Mammary epithelial cell (primary cell): ENCODE measurements at regions of chr9 and their contacts with region 1.

Region 1: GRCh38 chr9:21812946-21813568 is 10.6 kb downstream of the MTAP start:
- DNase-seq: peak; percentile 74
- H3K4me3 ChIP-seq: no peak overlapping the region
- H3K27ac ChIP-seq: peak overlapping the region; percentile 79
- H3K4me1 ChIP-seq: peaks cover 50% of the 10 kb centered on the region
- H3K27me3 ChIP-seq: no peaks in the 10 kb centered on the region
- CTCF ChIP-seq: peak; percentile 85 to 91

Region 2: GRCh38 chr9:21119093-21119770 is 693.8 kb before region 1 on chr9:
- CTCF ChIA-PET with region 1: no interaction called
- dilution Hi-C with region 1: no loop called
- in situ Hi-C with region 1: no loop called
- intact Hi-C with region 1: no loop called
- DNase-seq: no peak
- H3K4me3 ChIP-seq: no peak overlapping the region
- H3K27ac ChIP-seq: no peak overlapping the region
- H3K4me1 ChIP-seq: no peaks in the 10 kb centered on the region
- H3K27me3 ChIP-seq: peaks cover 13% of the 10 kb centered on the region
- CTCF ChIP-seq: no peak

Region 3: GRCh38 chr9:21228122-21228521 is 584.9 kb before region 1 on chr9 and contains the start of gene IFNA17:
- CTCF ChIA-PET with region 1: no interaction called
- dilution Hi-C with region 1: no loop called
- in situ Hi-C with region 1: no loop called
- intact Hi-C with region 1: no loop called
- DNase-seq: no peak
- H3K4me3 ChIP-seq: no peak within 1 kb of the TSS
- H3K27ac ChIP-seq: no peak within 1 kb of the TSS
- H3K4me1 ChIP-seq: no peaks in the 10 kb centered on the region
- H3K27me3 ChIP-seq: no peaks in the 10 kb centered on the region
- CTCF ChIP-seq: no peak
- total RNA-seq, gene IFNA17: not detected

Region 4: GRCh38 chr9:21875893-21876292 is 62.8 kb after region 1 on chr9:
- CTCF ChIA-PET with region 1: no interaction called
- dilution Hi-C with region 1: loop called (anchors 5 kb)
- in situ Hi-C with region 1: no loop called
- intact Hi-C with region 1: no loop called
- DNase-seq: no peak
- H3K4me3 ChIP-seq: no peak overlapping the region
- H3K27ac ChIP-seq: no peak overlapping the region
- H3K4me1 ChIP-seq: peaks cover 8% of the 10 kb centered on the region
- H3K27me3 ChIP-seq: no peaks in the 10 kb centered on the region
- CTCF ChIP-seq: no peak

Region 5: DNA sequence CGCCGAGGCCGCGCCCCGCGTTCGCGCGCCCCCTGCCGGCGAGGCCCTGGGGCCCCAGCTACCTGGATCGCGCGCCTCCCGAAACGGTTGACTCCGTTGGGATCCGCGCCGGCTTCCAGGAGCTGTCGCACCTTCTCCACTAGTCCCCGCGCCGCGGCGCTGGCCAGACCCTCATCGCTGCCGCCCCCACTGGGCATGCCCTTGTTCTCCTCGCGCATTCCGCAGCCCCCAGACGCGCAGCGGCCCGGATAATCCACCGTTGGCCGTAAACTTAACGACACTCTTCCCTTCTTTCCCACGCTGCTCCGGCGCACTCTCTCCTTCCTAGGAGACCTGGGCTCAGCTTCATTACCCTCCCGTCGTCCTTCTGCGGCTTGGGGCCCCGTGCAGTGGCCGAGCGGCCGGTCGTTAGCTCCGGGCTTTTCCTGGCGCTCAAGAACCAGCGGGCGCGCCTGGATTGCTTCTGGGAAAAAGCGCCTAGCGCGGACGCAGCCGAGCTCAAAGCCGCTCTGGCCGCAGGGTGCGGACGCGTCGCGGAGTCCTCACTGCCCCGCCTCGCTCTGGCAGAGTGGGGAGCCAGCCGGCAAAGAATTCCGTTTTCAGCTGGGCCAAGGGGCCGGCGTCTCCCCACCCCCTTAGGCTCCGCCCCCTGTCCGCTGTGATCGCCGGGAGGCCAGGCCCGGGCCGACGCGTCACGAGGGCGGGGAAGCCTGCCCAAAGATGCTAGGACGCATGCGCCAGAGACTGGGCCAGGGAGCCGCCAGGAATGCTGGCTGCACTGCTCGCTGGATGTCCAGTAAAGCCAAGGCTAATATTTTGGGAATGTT is 195.9 kb after region 1 on chr9 and contains the start of gene CDKN2B:
- CTCF ChIA-PET with region 1: interaction called, 15 read pairs
- dilution Hi-C with region 1: no loop called
- in situ Hi-C with region 1: loop called (anchors 5 to 10 kb)
- intact Hi-C with region 1: loop called (anchors 1 kb)
- DNase-seq: peak; percentile 97
- H3K4me3 ChIP-seq: peak within 1 kb of the TSS; percentile 95 to 98 (median 96)
- H3K27ac ChIP-seq: peak within 1 kb of the TSS; percentile 88
- H3K4me1 ChIP-seq: peaks cover 12% of the 10 kb centered on the region
- H3K27me3 ChIP-seq: no peaks in the 10 kb centered on the region
- CTCF ChIP-seq: peak; percentile 63 to 97
- total RNA-seq, gene CDKN2B: 27.6 to 50.0 TPM

Region 6: GRCh38 chr9:22119537-22120158 is 306.6 kb after region 1 on chr9:
- CTCF ChIA-PET with region 1: interaction called, 7 read pairs
- dilution Hi-C with region 1: no loop called
- in situ Hi-C with region 1: loop called (anchors 10 kb)
- intact Hi-C with region 1: loop called (anchors 1 kb)
- DNase-seq: peak; percentile 59
- H3K4me3 ChIP-seq: no peak overlapping the region
- H3K27ac ChIP-seq: no peak overlapping the region
- H3K4me1 ChIP-seq: peaks cover 28% of the 10 kb centered on the region
- H3K27me3 ChIP-seq: no peaks in the 10 kb centered on the region
- CTCF ChIP-seq: peak; percentile 65 to 71

Region 7: DNA sequence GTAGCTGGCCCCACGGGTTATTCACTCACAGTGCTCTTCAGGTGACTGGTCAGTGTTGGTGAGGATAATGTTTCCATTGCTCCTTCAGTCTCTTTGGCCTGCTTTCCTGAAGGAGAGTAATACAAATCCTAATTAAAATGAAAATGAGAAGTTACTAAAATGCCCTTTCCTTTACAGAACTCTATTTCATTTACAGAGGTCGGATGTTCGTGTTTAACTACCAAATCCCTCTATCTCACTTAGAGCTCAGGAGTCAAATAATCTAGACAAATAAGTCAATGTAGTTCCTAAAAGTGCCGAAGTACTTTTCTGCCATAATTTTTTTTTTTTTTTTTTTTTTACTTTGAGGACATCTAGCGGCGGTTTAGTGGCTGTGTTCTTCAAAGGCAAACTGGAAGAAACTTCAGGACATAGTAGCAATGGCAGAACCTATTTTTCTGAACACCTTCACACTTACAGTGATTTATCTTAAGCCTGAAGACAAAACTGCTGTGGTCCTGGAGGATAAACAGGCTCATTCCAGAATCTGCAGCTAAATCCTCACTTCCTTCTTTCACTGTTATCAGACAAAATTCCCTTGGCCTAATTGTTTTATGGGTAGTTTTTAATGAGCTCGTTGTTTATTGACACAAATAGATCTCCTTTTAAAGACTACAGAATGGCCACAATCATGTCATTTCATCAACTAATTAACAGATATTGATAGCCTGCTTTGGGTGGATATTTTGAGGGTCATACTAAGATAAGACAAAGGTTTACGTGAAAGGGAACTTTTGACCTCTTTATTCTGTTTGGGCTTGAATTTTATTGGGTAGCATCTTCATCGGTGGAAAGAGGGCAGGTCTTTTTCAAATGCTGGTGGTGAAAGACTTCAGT is 426.0 kb after region 1 on chr9:
- CTCF ChIA-PET with region 1: interaction called, 4 read pairs
- dilution Hi-C with region 1: loop called (anchors 25 kb)
- in situ Hi-C with region 1: loop called (anchors 5 to 10 kb)
- intact Hi-C with region 1: loop called (anchors 1 kb)
- DNase-seq: peak; percentile 71
- H3K4me3 ChIP-seq: peak overlapping the region in 2 of 3 experiments; percentile 15 to 34
- H3K27ac ChIP-seq: peak overlapping the region; percentile 87
- H3K4me1 ChIP-seq: peaks cover 45% of the 10 kb centered on the region
- H3K27me3 ChIP-seq: no peaks in the 10 kb centered on the region
- CTCF ChIP-seq: peak; percentile 39 to 60

Region 8: GRCh38 chr9:22307013-22307711 is 494.1 kb after region 1 on chr9:
- CTCF ChIA-PET with region 1: no interaction called
- dilution Hi-C with region 1: no loop called
- in situ Hi-C with region 1: no loop called
- intact Hi-C with region 1: loop called (anchors 5 kb)
- DNase-seq: peak; percentile 50
- H3K4me3 ChIP-seq: no peak overlapping the region
- H3K27ac ChIP-seq: no peak overlapping the region
- H3K4me1 ChIP-seq: no peaks in the 10 kb centered on the region
- H3K27me3 ChIP-seq: no peaks in the 10 kb centered on the region
- CTCF ChIP-seq: peak; percentile 66 to 86

Region 9: DNA sequence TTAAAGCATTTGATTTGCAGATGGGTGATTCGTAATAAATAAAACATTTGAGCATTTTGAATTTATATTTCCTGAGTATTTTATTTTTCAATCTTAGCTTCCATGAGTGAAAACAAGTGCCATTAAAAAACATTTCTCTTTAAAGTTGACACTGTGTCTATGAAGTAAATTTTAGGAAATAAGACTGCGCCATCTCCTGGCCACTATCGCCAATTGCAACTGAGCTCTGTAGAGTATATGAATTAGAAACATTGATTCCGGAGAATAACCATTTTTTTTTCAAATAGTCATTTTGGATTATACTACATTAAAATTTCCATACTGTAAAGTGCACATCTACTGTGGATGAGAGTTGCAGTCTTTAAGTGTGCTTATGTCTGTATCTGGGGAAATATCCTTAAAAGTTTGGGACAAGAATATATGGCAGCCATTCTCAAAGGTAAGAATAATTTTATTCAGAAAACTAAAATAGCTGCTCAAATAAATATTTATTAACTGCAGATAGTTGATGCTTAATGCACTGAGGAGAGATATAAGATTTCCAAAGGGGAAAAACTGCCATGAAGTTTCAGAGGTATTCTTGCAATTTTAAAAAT is 639.5 kb after region 1 on chr9:
- CTCF ChIA-PET with region 1: interaction called, 3 read pairs
- dilution Hi-C with region 1: no loop called
- in situ Hi-C with region 1: loop called in 1 of 2 experiments (anchors 10 kb)
- intact Hi-C with region 1: loop called (anchors 1 kb)
- DNase-seq: no peak
- H3K4me3 ChIP-seq: no peak overlapping the region
- H3K27ac ChIP-seq: no peak overlapping the region
- H3K4me1 ChIP-seq: no peaks in the 10 kb centered on the region
- H3K27me3 ChIP-seq: no peaks in the 10 kb centered on the region
- CTCF ChIP-seq: peak; percentile 79 to 91